CD8-positive, alpha-beta T cell (primary cell): ENCODE measurements at regions of chr1 and their contacts with region 1.

Region 1: GRCh38 chr1:95072532-95073419 is at the start of gene ALG14:
- DNase-seq: peak; percentile 86 to 97 (median 95)
- ATAC-seq: peak; percentile 89
- H3K4me3 ChIP-seq: peak within 1 kb of the TSS; percentile 76 to 86
- H3K4me3 Mint-ChIP-seq: peak within 1 kb of the TSS; percentile 99
- H3K27ac ChIP-seq: peak within 1 kb of the TSS; percentile 61 to 86
- H3K27ac Mint-ChIP-seq: peak within 1 kb of the TSS; percentile 97
- H3K4me1 ChIP-seq: peaks cover 10% of the 10 kb centered on the region
- H3K4me1 Mint-ChIP-seq: peaks cover 13% of the 10 kb centered on the region
- H3K27me3 ChIP-seq: peaks cover 0 to 4% of the 10 kb centered on the region in 2 experiments
- H3K27me3 Mint-ChIP-seq: peaks cover 9% of the 10 kb centered on the region
- CTCF ChIP-seq: no peak
- total RNA-seq, gene ALG14: 0.27 to 0.61 TPM

Region 2: GRCh38 chr1:93758842-93759515 is 1313.8 kb before region 1 on chr1:
- CTCF ChIA-PET with region 1: no interaction called
- POLR2A ChIA-PET with region 1: no interaction called
- intact Hi-C with region 1: no loop called
- DNase-seq: peak in 4 of 9 experiments; percentile 29 to 73 (median 52)
- ATAC-seq: peak; percentile 38
- H3K4me3 ChIP-seq: no peak overlapping the region
- H3K4me3 Mint-ChIP-seq: no peak overlapping the region
- H3K27ac ChIP-seq: peak overlapping the region in 1 of 2 experiments; percentile 57
- H3K27ac Mint-ChIP-seq: peak overlapping the region; percentile 53
- H3K4me1 ChIP-seq: peaks cover 3% of the 10 kb centered on the region
- H3K4me1 Mint-ChIP-seq: peaks cover 11% of the 10 kb centered on the region
- H3K27me3 ChIP-seq: no peaks in the 10 kb centered on the region
- H3K27me3 Mint-ChIP-seq: no peaks in the 10 kb centered on the region
- CTCF ChIP-seq: no peak

Region 3: GRCh38 chr1:94417978-94418663 is 654.7 kb before region 1 on chr1 and contains the start of gene ABCD3:
- CTCF ChIA-PET with region 1: interaction called, 3 read pairs
- POLR2A ChIA-PET with region 1: no interaction called
- intact Hi-C with region 1: loop called (anchors 1 to 2 kb)
- DNase-seq: peak; percentile 93 to 99 (median 97)
- ATAC-seq: peak; percentile 91
- H3K4me3 ChIP-seq: peak within 1 kb of the TSS; percentile 63 to 81
- H3K4me3 Mint-ChIP-seq: no peak within 1 kb of the TSS
- H3K27ac ChIP-seq: peak within 1 kb of the TSS; percentile 67 to 85
- H3K27ac Mint-ChIP-seq: peak within 1 kb of the TSS; percentile 85
- H3K4me1 ChIP-seq: peaks cover 27% of the 10 kb centered on the region
- H3K4me1 Mint-ChIP-seq: peaks cover 42% of the 10 kb centered on the region
- H3K27me3 ChIP-seq: no peaks in the 10 kb centered on the region
- H3K27me3 Mint-ChIP-seq: peaks cover 2% of the 10 kb centered on the region
- CTCF ChIP-seq: no peak
- total RNA-seq, gene ABCD3: 17.9 to 18.1 TPM

Region 4: DNA sequence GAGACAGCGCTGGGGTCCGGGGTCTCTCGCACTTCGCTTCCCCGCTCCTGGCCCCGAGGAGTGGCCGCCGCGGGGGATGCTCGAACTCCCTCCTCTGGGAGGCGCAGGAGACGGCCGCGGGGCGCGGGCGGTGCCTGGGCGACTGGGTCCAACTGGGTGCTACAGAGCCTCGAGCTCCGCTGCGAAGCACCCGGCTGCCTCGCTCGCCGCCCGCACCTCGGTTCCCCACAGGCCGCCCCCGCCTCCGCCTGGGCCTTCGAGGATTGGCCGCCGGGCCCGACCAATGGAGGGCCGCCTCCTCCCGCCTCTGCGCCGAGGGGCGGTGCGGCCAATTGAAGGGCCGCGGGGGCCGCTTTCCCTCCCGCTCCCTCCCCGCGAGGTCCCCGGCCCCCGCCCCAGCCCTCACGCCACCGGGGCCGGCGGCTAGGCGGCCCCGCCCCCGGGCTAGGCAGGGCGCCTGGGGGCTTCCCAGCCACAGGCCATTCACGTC is 145.8 kb before region 1 on chr1 and contains the start of gene CNN3:
- CTCF ChIA-PET with region 1: no interaction called
- POLR2A ChIA-PET with region 1: no interaction called
- intact Hi-C with region 1: loop called (anchors 1 to 5 kb)
- DNase-seq: peak; percentile 38 to 83 (median 70)
- ATAC-seq: peak; percentile 85
- H3K4me3 ChIP-seq: peak within 1 kb of the TSS; percentile 41 to 62
- H3K4me3 Mint-ChIP-seq: peak within 1 kb of the TSS; percentile 91
- H3K27ac ChIP-seq: peak within 1 kb of the TSS in 1 of 2 experiments; percentile 11
- H3K27ac Mint-ChIP-seq: peak within 1 kb of the TSS; percentile 74
- H3K4me1 ChIP-seq: peaks cover 16% of the 10 kb centered on the region
- H3K4me1 Mint-ChIP-seq: peaks cover 25% of the 10 kb centered on the region
- H3K27me3 ChIP-seq: peaks cover 0 to 4% of the 10 kb centered on the region in 2 experiments
- H3K27me3 Mint-ChIP-seq: peaks cover 9% of the 10 kb centered on the region
- CTCF ChIP-seq: no peak
- total RNA-seq, gene CNN3: 7.5 to 9.4 TPM

Region 5: DNA sequence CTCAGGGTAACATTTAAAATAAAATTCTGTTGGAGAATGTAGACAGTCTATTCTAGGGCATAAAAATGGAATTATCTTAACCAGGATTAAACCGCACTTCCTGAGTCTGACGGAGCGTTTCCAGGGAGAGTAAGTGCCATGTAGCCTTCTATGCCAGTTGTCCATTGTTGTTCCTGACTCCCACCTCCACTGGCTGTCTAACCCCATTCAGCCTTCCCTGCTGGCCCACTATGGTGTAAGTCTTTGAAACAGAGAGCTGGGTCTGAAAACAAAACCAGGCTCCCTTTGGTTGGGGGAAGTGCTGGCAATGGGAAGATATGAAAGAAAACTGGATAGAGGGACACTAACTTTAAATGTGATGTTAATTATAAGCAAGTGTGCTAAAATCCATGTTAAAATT is 74.7 kb before region 1 on chr1:
- CTCF ChIA-PET with region 1: no interaction called
- POLR2A ChIA-PET with region 1: no interaction called
- intact Hi-C with region 1: no loop called
- DNase-seq: no peak
- ATAC-seq: no peak
- H3K4me3 ChIP-seq: no peak overlapping the region
- H3K4me3 Mint-ChIP-seq: no peak overlapping the region
- H3K27ac ChIP-seq: no peak overlapping the region
- H3K27ac Mint-ChIP-seq: no peak overlapping the region
- H3K4me1 ChIP-seq: peaks cover 9% of the 10 kb centered on the region
- H3K4me1 Mint-ChIP-seq: peaks cover 14% of the 10 kb centered on the region
- H3K27me3 ChIP-seq: no peaks in the 10 kb centered on the region
- H3K27me3 Mint-ChIP-seq: no peaks in the 10 kb centered on the region
- CTCF ChIP-seq: no peak

Region 6: DNA sequence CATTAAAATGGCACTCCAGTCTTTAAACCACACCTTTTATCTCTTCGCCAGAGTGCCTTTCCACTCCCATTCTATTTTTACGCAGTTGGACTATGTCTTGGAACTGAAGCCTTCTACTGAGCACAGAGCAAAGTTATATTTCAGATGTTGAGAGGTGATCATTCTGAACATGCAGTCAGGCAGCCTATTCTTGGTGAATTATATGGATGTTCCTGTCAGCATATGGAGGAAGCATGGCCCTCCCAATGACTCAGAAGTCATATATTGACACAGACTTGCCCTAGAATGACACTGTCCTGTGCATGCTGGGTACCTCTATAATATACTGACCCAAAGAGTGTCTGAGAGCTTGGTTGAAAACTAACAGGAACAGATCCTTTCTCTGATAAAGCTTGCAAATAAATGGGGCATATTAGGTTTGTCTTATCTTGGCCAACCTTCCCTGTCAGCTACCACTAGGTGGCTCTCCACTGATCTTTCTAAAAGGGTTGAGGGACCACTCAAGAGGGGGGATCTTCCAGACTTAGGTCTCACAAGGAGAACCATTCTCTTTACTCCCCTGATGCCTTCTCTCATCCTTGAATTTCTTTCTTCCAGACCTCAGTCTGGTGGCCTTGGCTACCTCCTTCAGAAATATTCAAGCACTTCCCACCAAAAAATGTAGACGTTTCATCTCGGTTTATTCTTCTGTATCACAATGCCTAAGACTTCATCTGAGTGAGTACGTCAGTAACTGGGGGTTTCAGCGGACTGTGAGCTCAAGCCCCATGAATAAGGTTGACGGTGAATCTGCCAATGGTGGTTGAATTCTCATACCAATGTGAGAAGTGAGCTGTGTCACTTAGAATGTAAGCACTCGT is 11.8 kb after region 1 on chr1:
- CTCF ChIA-PET with region 1: interaction called, 37 read pairs
- POLR2A ChIA-PET with region 1: interaction called, 4 read pairs
- intact Hi-C with region 1: loop called in 1 of 2 experiments (anchors 1 kb)
- DNase-seq: peak in 5 of 9 experiments; percentile 17 to 60 (median 19)
- ATAC-seq: peak; percentile 66
- H3K4me3 ChIP-seq: no peak overlapping the region
- H3K4me3 Mint-ChIP-seq: no peak overlapping the region
- H3K27ac ChIP-seq: no peak overlapping the region
- H3K27ac Mint-ChIP-seq: no peak overlapping the region
- H3K4me1 ChIP-seq: no peaks in the 10 kb centered on the region
- H3K4me1 Mint-ChIP-seq: peaks cover 4% of the 10 kb centered on the region
- H3K27me3 ChIP-seq: no peaks in the 10 kb centered on the region
- H3K27me3 Mint-ChIP-seq: peaks cover 9% of the 10 kb centered on the region
- CTCF ChIP-seq: peak; percentile 63

Region 7: DNA sequence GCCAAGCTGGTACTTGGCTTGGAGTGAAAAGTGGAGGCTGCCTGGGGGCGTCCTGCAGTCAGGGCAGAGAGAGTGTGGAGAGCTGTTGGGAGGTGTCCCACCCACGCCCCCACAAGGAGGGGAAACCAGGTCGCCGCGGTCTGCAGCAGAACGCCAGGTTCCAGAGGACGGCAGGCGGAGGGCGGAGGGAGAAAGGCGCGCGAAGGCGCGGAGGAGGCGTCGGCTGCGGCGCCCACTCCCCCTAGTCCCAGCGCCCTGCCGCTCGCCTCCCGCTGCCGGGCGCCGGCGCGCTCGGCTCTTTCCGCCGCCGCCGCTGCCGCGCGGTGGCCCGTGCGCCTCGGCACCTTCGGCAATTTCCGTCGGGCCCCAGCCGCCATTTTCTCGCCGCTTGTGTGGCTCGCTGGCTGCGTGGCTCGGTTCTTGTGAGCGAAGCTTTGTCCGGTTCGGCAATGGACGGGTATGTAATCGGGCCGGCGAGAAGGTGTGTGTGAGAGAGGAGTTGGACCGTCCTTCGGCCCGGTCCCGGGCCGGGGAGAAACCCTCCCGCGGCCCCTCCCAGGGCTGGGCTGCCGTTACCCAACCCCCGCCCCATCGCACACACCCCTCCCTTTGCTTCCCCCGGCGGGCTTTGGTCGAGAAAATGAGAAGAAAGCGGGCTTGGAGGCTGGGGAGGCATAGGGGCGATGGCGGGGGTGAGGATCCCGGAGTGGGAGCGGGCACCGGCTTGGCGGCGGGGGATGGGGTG is 1648.8 kb after region 1 on chr1 and contains the start of gene PTBP2:
- CTCF ChIA-PET with region 1: no interaction called
- POLR2A ChIA-PET with region 1: no interaction called
- intact Hi-C with region 1: loop called (anchors 2 to 5 kb)
- DNase-seq: peak; percentile 67 to 90 (median 82)
- ATAC-seq: peak; percentile 87
- H3K4me3 ChIP-seq: peak within 1 kb of the TSS; percentile 98 to 100
- H3K4me3 Mint-ChIP-seq: peak within 1 kb of the TSS; percentile 91
- H3K27ac ChIP-seq: peak within 1 kb of the TSS; percentile 88 to 89
- H3K27ac Mint-ChIP-seq: peak within 1 kb of the TSS; percentile 96
- H3K4me1 ChIP-seq: peaks cover 22% of the 10 kb centered on the region
- H3K4me1 Mint-ChIP-seq: peaks cover 28% of the 10 kb centered on the region
- H3K27me3 ChIP-seq: no peaks in the 10 kb centered on the region
- H3K27me3 Mint-ChIP-seq: no peaks in the 10 kb centered on the region
- CTCF ChIP-seq: no peak
- total RNA-seq, gene PTBP2: 30.6 to 32.9 TPM